Activated B cell treated with CpG ODN at 0.5 μM for 24 hours (primary cell): ENCODE measurements at regions of chr17 and their contacts with region 1.

Region 1: DNA sequence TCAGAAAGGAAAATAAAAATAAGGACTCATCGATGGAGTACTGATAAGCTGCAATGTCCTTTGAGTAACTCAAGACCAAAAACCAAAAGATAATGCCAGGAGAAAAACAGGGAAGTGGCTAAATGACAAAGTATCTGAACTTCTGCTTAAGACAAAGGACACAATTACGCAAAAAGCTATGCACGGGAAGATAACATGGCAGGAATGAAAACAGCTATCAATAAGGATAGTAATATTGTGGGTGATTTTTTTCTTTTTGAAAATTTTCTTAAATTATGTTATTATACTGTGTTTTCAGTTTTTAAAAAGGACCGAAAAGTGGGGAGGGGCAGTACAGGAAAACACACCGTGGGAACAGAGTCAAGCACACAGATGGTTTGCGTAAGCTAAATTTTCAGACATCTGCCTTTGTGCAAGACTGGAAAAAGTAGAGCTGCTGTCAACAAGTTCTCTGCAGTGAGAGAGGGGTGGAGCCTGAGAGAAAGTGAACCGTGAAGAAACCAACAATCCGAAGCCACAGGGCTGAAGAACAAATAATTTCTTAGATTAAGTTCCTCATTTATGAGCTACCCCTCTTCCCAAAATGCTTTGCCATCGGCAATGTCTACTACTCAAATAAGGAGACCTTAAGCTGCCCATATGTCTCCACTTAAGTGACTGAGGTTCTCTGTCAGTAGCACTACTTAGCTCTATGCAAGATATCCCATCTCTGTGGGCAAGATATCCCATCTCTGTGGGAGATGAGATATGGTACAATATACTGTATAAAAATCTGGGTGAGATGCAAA is 99.9 kb upstream of the CORO6 start:
- DNase-seq: no peak
- ATAC-seq: peak; percentile 85
- H3K4me3 Mint-ChIP-seq: peak overlapping the region; percentile 60
- H3K27ac Mint-ChIP-seq: peak overlapping the region; percentile 89
- H3K4me1 Mint-ChIP-seq: peaks cover 92% of the 10 kb centered on the region
- H3K27me3 Mint-ChIP-seq: no peaks in the 10 kb centered on the region
- CTCF ChIP-seq: no peak

Region 2: DNA sequence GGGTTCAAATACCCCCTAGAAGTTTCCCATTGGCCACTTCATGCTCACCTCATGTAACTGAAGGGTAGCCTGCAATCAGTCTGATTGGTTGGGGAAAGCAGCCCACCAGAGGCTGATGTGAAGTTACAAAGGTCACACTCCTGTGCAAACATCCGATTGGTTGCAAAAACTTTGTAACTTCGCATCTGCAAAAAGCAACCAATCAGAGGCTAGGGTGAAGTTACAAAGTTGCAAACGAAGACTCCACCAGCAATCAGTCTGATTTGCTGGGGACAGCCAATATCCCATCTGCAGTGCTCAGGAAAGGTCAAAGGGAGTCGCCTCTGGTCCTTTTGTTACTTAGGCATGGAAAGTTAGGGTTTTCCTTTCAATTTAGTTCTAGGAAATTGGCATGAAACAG is 292.3 kb before region 1 on chr17:
- CTCF ChIA-PET with region 1: no interaction called
- POLR2A ChIA-PET with region 1: no interaction called
- intact Hi-C with region 1: no loop called
- DNase-seq: no peak
- ATAC-seq: no peak
- H3K4me3 Mint-ChIP-seq: no peak overlapping the region
- H3K27ac Mint-ChIP-seq: no peak overlapping the region
- H3K4me1 Mint-ChIP-seq: peaks cover 24% of the 10 kb centered on the region
- H3K27me3 Mint-ChIP-seq: no peaks in the 10 kb centered on the region
- CTCF ChIP-seq: no peak

Region 3: GRCh38 chr17:29549177-29549923 is 173.3 kb before region 1 on chr17:
- CTCF ChIA-PET with region 1: no interaction called
- POLR2A ChIA-PET with region 1: no interaction called
- intact Hi-C with region 1: no loop called
- DNase-seq: no peak
- ATAC-seq: no peak
- H3K4me3 Mint-ChIP-seq: no peak overlapping the region
- H3K27ac Mint-ChIP-seq: no peak overlapping the region
- H3K4me1 Mint-ChIP-seq: no peaks in the 10 kb centered on the region
- H3K27me3 Mint-ChIP-seq: no peaks in the 10 kb centered on the region
- CTCF ChIP-seq: no peak

Region 4: DNA sequence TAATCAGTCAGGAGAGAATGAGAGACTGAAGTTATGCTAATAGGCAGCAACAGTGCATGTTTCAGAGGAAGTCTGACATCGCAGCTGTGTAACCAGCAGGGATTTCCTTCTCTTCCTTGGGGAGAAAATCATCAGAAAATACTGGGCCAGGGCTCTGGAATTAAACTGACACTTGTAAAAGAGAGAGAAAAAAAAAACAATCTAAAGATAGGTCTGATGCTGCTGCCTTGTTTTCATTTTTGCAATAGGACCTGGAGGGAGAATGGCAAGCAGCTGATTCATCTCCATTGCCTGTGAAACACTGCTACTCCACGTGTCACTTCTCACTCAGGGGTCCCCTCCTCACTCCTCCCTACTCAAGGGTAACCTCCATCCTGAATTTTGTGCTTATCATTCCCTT is 82.2 kb before region 1 on chr17:
- CTCF ChIA-PET with region 1: interaction called, 6 read pairs
- POLR2A ChIA-PET with region 1: interaction called, 23 read pairs
- intact Hi-C with region 1: no loop called
- DNase-seq: no peak
- ATAC-seq: no peak
- H3K4me3 Mint-ChIP-seq: no peak overlapping the region
- H3K27ac Mint-ChIP-seq: peak overlapping the region; percentile 89
- H3K4me1 Mint-ChIP-seq: peaks cover 32% of the 10 kb centered on the region
- H3K27me3 Mint-ChIP-seq: no peaks in the 10 kb centered on the region
- CTCF ChIP-seq: no peak

Region 5: DNA sequence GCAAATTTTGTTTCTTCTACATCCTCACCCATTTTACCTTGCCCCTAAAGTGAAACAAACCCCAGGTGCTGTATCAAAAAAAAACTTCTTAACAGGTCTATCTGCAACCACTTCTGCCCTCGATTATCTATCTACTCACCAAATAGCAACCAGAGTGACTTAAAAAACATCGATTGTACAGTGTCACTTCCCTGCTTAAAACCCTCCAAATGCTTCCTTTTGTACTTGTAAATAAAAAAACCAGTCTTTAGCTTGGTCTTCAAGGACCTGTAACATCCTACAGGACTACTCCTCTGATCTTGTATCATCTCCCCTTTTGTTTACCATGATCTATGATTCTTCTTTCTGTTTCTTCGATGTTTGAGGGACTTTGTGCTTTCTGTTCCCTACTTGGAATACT is 17.2 kb before region 1 on chr17:
- CTCF ChIA-PET with region 1: interaction called, 4 read pairs
- POLR2A ChIA-PET with region 1: interaction called, 115 read pairs
- intact Hi-C with region 1: loop called (anchors 1 kb)
- DNase-seq: no peak
- ATAC-seq: no peak
- H3K4me3 Mint-ChIP-seq: peak overlapping the region; percentile 57
- H3K27ac Mint-ChIP-seq: peak overlapping the region; percentile 98
- H3K4me1 Mint-ChIP-seq: peaks cover 70% of the 10 kb centered on the region
- H3K27me3 Mint-ChIP-seq: no peaks in the 10 kb centered on the region
- CTCF ChIP-seq: no peak

Region 6: GRCh38 chr17:29732613-29733012 is 10.0 kb after region 1 on chr17:
- CTCF ChIA-PET with region 1: no interaction called
- POLR2A ChIA-PET with region 1: interaction called, 13 read pairs
- intact Hi-C with region 1: no loop called
- DNase-seq: no peak
- ATAC-seq: no peak
- H3K4me3 Mint-ChIP-seq: no peak overlapping the region
- H3K27ac Mint-ChIP-seq: peak overlapping the region; percentile 59
- H3K4me1 Mint-ChIP-seq: peaks cover 61% of the 10 kb centered on the region
- H3K27me3 Mint-ChIP-seq: no peaks in the 10 kb centered on the region
- CTCF ChIP-seq: no peak

Region 7: DNA sequence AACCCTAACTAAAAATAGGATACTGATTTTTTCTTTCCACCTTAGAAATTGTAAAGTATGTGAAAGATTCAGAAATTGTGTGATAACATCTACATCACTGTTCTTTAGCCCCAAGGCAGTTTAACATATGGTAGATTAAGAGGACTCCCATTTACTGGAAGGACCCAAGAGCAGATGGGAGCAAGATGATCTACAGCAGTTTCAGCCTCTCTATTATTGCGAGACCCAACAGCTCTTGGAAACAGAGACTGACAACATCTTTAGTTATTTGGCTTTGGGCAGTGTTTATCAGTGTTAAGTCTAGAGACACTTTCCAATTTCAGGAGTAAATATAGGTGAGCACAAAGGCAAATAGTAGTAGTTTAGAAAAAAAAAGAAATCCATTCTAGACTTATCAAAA is 25.1 kb after region 1 on chr17:
- CTCF ChIA-PET with region 1: no interaction called
- POLR2A ChIA-PET with region 1: interaction called, 16 read pairs
- intact Hi-C with region 1: no loop called
- DNase-seq: no peak
- ATAC-seq: no peak
- H3K4me3 Mint-ChIP-seq: no peak overlapping the region
- H3K27ac Mint-ChIP-seq: peak overlapping the region; percentile 24
- H3K4me1 Mint-ChIP-seq: peaks cover 71% of the 10 kb centered on the region
- H3K27me3 Mint-ChIP-seq: no peaks in the 10 kb centered on the region
- CTCF ChIP-seq: no peak

Region 8: DNA sequence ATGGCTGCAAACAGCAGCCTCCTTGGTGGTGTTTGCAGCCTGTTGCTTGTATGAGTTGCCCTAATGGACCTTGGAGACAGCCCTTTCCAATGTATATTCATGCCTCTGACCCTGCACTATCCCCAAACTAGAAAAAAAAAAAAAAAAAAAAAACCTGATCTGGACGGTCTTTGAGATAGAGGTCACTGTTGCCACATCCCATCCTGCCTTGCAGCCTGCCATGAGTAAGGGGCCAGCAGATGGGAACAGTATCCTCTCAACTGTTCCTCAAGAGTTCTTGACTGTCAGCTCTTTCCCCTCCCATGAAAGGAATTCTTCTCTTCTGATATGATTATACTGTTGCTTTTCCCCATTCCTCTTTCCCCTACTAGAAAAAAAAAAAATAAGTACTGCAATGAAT is 55.1 kb after region 1 on chr17:
- CTCF ChIA-PET with region 1: interaction called, 8 read pairs
- POLR2A ChIA-PET with region 1: interaction called, 7 read pairs
- intact Hi-C with region 1: loop called (anchors 2 kb)
- DNase-seq: no peak
- ATAC-seq: no peak
- H3K4me3 Mint-ChIP-seq: no peak overlapping the region
- H3K27ac Mint-ChIP-seq: no peak overlapping the region
- H3K4me1 Mint-ChIP-seq: peaks cover 14% of the 10 kb centered on the region
- H3K27me3 Mint-ChIP-seq: no peaks in the 10 kb centered on the region
- CTCF ChIP-seq: no peak

Region 9: DNA sequence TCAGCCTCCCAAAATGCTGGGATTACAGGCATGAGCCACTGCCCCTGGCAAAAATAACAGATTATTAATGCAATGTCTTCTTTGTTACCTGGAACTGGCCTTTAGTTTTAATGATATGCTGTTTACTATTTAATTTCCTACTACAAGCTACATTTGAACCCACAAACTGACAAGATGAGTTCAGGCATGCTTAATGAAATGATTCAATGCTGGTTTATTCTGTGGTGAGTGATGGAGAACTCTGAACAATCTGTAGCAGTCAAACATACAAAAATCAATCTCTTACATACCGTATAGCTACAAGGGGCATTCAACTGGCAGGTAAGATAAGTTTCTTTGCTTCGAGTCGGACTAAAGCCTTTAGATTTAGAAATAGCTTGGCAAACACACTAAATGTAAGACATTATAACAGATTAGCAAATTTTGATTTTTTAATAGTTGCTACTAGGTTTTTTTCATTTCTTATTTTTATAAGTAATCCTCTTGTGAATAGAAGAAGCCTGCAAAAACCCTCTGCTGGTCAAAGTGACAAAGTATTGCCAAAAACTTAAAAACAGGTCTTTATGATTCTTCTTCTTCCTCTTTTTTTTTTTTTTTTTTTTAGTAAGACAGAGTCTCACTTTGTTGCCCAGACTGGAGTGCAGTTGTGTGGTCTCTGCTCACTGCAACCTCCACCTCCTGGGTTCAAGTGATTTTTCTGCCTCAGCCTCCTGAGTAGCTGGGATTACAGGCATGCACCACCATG is 68.9 kb after region 1 on chr17:
- CTCF ChIA-PET with region 1: no interaction called
- POLR2A ChIA-PET with region 1: no interaction called
- intact Hi-C with region 1: no loop called
- DNase-seq: no peak
- ATAC-seq: no peak
- H3K4me3 Mint-ChIP-seq: no peak overlapping the region
- H3K27ac Mint-ChIP-seq: no peak overlapping the region
- H3K4me1 Mint-ChIP-seq: peaks cover 5% of the 10 kb centered on the region
- H3K27me3 Mint-ChIP-seq: no peaks in the 10 kb centered on the region
- CTCF ChIP-seq: no peak

Region 10: DNA sequence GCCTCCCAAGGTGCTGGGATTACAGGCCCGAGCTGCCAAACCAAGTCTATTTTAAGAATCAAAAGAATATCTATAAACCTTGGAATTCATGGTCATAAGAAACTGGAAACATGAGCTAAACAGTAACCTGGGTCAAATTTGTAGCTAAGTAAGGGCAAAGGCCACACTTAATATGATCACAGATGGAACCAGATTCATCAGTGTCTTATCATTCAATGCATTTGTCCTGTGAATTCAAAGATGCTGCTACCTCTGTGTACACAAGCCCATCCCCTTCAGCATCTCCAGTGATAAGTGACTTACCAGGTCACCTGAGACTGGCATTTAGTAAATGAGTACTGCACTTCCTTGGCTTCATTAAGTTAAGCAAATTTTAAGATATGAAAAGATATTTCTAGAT is 99.3 kb after region 1 on chr17:
- CTCF ChIA-PET with region 1: no interaction called
- POLR2A ChIA-PET with region 1: no interaction called
- intact Hi-C with region 1: no loop called
- DNase-seq: no peak
- ATAC-seq: no peak
- H3K4me3 Mint-ChIP-seq: no peak overlapping the region
- H3K27ac Mint-ChIP-seq: no peak overlapping the region
- H3K4me1 Mint-ChIP-seq: no peaks in the 10 kb centered on the region
- H3K27me3 Mint-ChIP-seq: no peaks in the 10 kb centered on the region
- CTCF ChIP-seq: no peak